ENCODE measurements at regions of chr13 and their contacts with region 1.

Region 1: GRCh38 chr13:49435992-49436391 is 7.9 kb downstream of the CAB39L start:
- DNase-seq: no peak
- H3K4me3 ChIP-seq: no peak overlapping the region
- H3K27ac ChIP-seq: no peak overlapping the region
- H3K4me1 ChIP-seq: no peaks in the 10 kb centered on the region
- H3K27me3 ChIP-seq: no peaks in the 10 kb centered on the region
- CTCF ChIP-seq: no peak

Region 2: GRCh38 chr13:49367640-49368422 is 68.2 kb before region 1 on chr13:
- CTCF ChIA-PET with region 1: interaction called, 11 read pairs
- POLR2A ChIA-PET with region 1: no interaction called
- intact Hi-C with region 1: no loop called
- DNase-seq: peak; percentile 6
- H3K4me3 ChIP-seq: no peak overlapping the region
- H3K27ac ChIP-seq: no peak overlapping the region
- H3K4me1 ChIP-seq: no peaks in the 10 kb centered on the region
- H3K27me3 ChIP-seq: no peaks in the 10 kb centered on the region
- CTCF ChIP-seq: no peak

Region 3: DNA sequence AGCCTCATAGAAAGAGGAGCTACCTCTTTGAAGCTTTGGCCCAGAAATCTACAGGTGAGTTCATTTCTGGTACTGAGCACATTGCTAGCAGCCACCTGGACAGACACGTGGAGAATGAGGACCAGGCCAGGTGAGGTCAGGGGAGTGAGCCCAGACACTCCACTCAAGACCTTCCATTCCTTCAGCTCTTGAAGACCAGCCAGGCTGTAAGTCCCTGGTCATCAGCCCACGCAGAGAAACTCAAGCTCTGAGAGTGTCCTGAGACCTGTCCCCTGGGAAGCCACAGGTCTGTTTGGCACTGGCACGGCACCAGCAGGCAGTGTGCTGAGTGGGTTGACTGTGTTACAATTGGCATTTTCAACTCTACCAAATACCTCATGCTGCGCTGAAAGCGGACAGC is 1647.7 kb after region 1 on chr13:
- CTCF ChIA-PET with region 1: no interaction called
- POLR2A ChIA-PET with region 1: no interaction called
- intact Hi-C with region 1: no loop called
- DNase-seq: no peak
- H3K4me3 ChIP-seq: no peak overlapping the region
- H3K27ac ChIP-seq: no peak overlapping the region
- H3K4me1 ChIP-seq: no peaks in the 10 kb centered on the region
- H3K27me3 ChIP-seq: no peaks in the 10 kb centered on the region
- CTCF ChIP-seq: no peak

Measured in A673 (cell line).